ENCODE measurements at regions of chr13 and their contacts with region 1.

Region 1: DNA sequence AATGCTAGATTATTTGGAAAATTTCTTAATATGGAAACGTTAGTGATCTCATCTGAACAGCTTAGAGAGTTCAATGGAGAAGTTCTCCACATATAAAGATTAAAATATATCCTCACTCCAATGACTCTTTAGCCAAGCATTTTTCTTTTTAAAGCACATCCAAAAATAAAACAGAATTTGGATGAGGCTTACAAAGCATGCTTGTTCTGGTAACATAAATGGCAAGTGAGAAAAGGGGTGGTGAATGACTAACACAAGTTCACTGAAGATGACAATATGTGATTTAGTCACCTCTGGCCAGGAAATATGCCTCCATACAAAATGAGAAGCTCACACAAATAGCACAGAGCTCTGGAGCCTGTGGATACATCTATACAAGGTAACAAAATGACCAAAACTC is 253.0 kb downstream of the PCDH20 start:
- DNase-seq: no peak
- H3K4me3 ChIP-seq: no peak overlapping the region
- H3K27ac ChIP-seq: peak overlapping the region in 8 of 59 donors; percentile 4 to 59 (median 28)
- H3K27me3 ChIP-seq: no peaks in the 10 kb centered on the region
- CTCF ChIP-seq: no peak

Region 2: DNA sequence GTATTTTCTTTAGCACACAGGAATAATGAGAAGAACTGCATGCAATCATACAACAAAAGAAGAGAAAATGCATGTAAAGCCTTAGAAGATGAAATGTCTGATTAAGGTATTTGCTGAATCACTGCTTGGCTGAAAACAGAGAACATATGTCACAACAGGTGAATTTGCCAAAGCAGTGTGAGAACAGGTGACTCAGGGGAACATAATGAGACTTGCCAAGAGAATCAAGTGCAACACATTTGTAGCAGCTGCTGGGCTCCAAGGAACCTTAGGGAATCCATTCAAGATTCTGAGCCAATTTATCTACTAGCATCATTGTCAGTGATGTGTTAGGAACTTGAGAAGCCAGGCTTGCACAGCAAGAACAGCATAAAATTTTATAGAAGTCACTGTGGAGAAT is 20.1 kb before region 1 on chr13:
- intact Hi-C with region 1: loop called in 1 of 2 experiments (anchors 2 kb)
- DNase-seq: peak in 2 of 10 donors; percentile 52 to 54
- H3K4me3 ChIP-seq: no peak overlapping the region
- H3K27ac ChIP-seq: peak overlapping the region in 5 of 59 donors; percentile 2 to 68 (median 55)
- H3K27me3 ChIP-seq: no peaks in the 10 kb centered on the region
- CTCF ChIP-seq: no peak